Caco-2 (cell line): ENCODE measurements at regions of chr2 and their contacts with region 1.

Region 1: GRCh38 chr2:54691445-54692135 is 31.9 kb upstream of the EML6 start:
- DNase-seq: peak; percentile 74 to 81
- H3K4me3 ChIP-seq: no peak overlapping the region
- H3K4me3 Mint-ChIP-seq: no peak overlapping the region
- H3K27ac Mint-ChIP-seq: no peak overlapping the region
- H3K4me1 ChIP-seq: peaks cover 16% of the 10 kb centered on the region
- H3K4me1 Mint-ChIP-seq: peaks cover 9% of the 10 kb centered on the region
- H3K27me3 ChIP-seq: no peaks in the 10 kb centered on the region
- H3K27me3 Mint-ChIP-seq: no peaks in the 10 kb centered on the region
- CTCF ChIP-seq: peak in 1 of 2 experiments; percentile 7

Region 2: DNA sequence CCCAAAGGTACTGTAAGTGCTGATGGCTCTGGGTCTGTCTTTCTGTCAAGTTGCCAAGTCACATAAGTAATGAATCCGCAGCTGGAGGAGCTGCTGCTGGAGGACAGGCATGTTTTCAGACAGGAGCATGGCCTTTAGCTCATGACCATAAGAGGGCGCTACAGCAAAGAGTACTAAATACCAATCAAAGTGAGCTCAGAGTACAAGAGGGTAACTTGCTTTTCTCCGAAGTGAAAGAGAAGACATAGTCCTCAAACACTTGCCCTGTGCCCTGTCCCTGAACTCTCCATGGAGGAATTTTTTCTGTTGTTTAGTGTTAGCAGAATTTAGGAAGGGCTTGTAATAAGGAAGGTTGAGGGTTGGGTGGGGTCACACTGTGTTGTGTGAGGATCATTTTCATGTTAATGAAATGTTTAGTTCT is 26.1 kb before region 1 on chr2:
- CTCF ChIA-PET with region 1: interaction called, 27 read pairs
- POLR2A ChIA-PET with region 1: interaction called, 4 read pairs
- intact Hi-C with region 1: loop called (anchors 1 kb)
- DNase-seq: peak; percentile 63 to 70
- H3K4me3 ChIP-seq: no peak overlapping the region
- H3K4me3 Mint-ChIP-seq: peak overlapping the region; percentile 8
- H3K27ac Mint-ChIP-seq: peak overlapping the region; percentile 83
- H3K4me1 ChIP-seq: peaks cover 33% of the 10 kb centered on the region
- H3K4me1 Mint-ChIP-seq: peaks cover 41% of the 10 kb centered on the region
- H3K27me3 ChIP-seq: no peaks in the 10 kb centered on the region
- H3K27me3 Mint-ChIP-seq: no peaks in the 10 kb centered on the region
- CTCF ChIP-seq: peak; percentile 55 to 68

Region 3: DNA sequence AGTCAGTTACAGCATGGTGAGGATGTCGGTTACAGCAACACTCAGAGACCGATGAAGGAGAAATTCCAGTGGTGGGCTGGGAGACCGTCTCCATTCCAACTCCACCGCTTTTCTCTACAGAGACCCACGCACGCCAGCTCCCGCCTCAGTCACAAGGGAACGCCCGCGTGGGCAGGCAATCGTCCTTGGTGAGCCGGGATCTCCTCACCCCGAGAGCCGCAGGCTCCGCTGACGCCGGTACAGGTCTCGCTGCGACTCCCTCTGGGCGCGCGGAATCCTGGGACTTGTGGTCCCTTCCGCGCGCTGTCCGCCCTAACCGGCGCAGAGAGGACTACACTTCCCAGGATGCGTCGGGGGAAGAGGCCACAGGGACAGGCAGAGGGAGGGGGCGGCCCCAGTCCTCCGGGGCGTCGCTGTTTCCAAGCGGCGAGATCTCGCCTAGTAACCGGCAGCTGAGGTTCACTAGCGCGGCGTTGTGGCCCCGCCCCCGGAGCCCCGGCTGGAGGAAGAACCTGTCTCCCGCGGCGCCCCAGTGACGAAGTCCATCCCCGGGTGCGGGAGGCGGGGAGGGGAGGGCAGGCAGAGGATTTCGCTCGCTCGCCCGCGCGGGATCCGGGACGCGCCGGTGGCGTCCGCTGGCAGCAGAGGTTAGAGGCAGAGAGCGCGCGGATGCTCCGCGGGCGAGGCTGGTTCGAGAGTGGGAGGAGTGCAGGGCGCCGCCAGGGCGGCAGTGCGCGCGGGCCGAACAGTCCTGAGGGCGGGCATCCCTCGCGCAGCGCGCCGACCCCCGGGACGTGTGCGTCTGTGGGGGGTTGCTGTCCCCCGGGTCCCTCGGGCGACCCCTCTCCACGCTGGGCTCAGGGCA is 31.8 kb after region 1 on chr2 and contains the start of gene EML6:
- CTCF ChIA-PET with region 1: interaction called, 5 read pairs
- POLR2A ChIA-PET with region 1: interaction called, 4 read pairs
- intact Hi-C with region 1: loop called (anchors 2 kb)
- DNase-seq: peak; percentile 99
- H3K4me3 ChIP-seq: peak within 1 kb of the TSS; percentile 76
- H3K4me3 Mint-ChIP-seq: peak within 1 kb of the TSS; percentile 92
- H3K27ac Mint-ChIP-seq: peak within 1 kb of the TSS; percentile 70
- H3K4me1 ChIP-seq: no peaks in the 10 kb centered on the region
- H3K4me1 Mint-ChIP-seq: no peaks in the 10 kb centered on the region
- H3K27me3 ChIP-seq: no peaks in the 10 kb centered on the region
- H3K27me3 Mint-ChIP-seq: peaks cover 6% of the 10 kb centered on the region
- CTCF ChIP-seq: peak in 1 of 2 experiments; percentile 13
- total RNA-seq, gene EML6: 5.2 and 9.7 TPM in 2 replicates